GM12878 (cell line): ENCODE measurements at regions of chr9 and their contacts with region 1.

Region 1: GRCh38 chr9:68949271-68950000 is 64.5 kb downstream of the PRKACG start:
- DNase-seq: peak; percentile 45
- ATAC-seq: peak; percentile 57
- H3K4me3 ChIP-seq: no peak overlapping the region
- H3K27ac ChIP-seq: peak overlapping the region; percentile 54
- H3K4me1 ChIP-seq: peaks cover 44% of the 10 kb centered on the region
- H3K27me3 ChIP-seq: no peaks in the 10 kb centered on the region; a peak in 1 of 4 replicates
- CTCF ChIP-seq: peak; percentile 14 to 56 (median 49); a peak in 5 of 6 replicates
- EP300 ChIP-seq: no peak
- POLR2A ChIP-seq: no peak
- RAD21 ChIP-seq: peak; percentile 77

Region 2: GRCh38 chr9:68685770-68686169 is 263.7 kb before region 1 on chr9:
- CTCF ChIA-PET with region 1: interaction called, 27 read pairs
- POLR2A ChIA-PET with region 1: no interaction called
- RAD21 ChIA-PET with region 1: interaction called, 6 read pairs
- SMC1A ChIA-PET with region 1: interaction called, 21 read pairs
- in situ Hi-C with region 1: no loop called
- intact Hi-C with region 1: loop called (anchors 5 kb)
- DNase-seq: no peak
- ATAC-seq: peak; percentile 99
- H3K4me3 ChIP-seq: no peak overlapping the region
- H3K27ac ChIP-seq: no peak overlapping the region
- H3K4me1 ChIP-seq: no peaks in the 10 kb centered on the region
- H3K27me3 ChIP-seq: no peaks in the 10 kb centered on the region
- CTCF ChIP-seq: peak; percentile 73 to 86 (median 77)
- EP300 ChIP-seq: no peak
- POLR2A ChIP-seq: no peak
- RAD21 ChIP-seq: peak; percentile 90

Region 3: GRCh38 chr9:68779558-68780384 is 169.7 kb before region 1 on chr9:
- CTCF ChIA-PET with region 1: interaction called, 3 read pairs
- POLR2A ChIA-PET with region 1: interaction called, 4 read pairs
- RAD21 ChIA-PET with region 1: interaction called, 3 read pairs
- SMC1A ChIA-PET with region 1: interaction called, 6 read pairs
- in situ Hi-C with region 1: no loop called
- intact Hi-C with region 1: loop called (anchors 2 kb)
- DNase-seq: peak; percentile 77
- ATAC-seq: peak; percentile 90
- H3K4me3 ChIP-seq: peak overlapping the region; percentile 83
- H3K27ac ChIP-seq: peak overlapping the region; percentile 92
- H3K4me1 ChIP-seq: peaks cover 2% of the 10 kb centered on the region; the same call in 1 of the 2 replicates
- H3K27me3 ChIP-seq: no peaks in the 10 kb centered on the region
- CTCF ChIP-seq: peak; percentile 31 to 56 (median 38); a peak in 5 of 6 replicates
- EP300 ChIP-seq: no peak
- POLR2A ChIP-seq: peak; percentile 93
- RAD21 ChIP-seq: peak; percentile 37

Region 4: GRCh38 chr9:68966496-68966944 is 17.1 kb after region 1 on chr9:
- CTCF ChIA-PET with region 1: interaction called, 56 read pairs
- POLR2A ChIA-PET with region 1: interaction called, 6 read pairs
- RAD21 ChIA-PET with region 1: interaction called, 41 read pairs
- SMC1A ChIA-PET with region 1: interaction called, 64 read pairs
- in situ Hi-C with region 1: no loop called
- intact Hi-C with region 1: loop called (anchors 2 kb)
- DNase-seq: peak; percentile 46
- ATAC-seq: peak; percentile 86
- H3K4me3 ChIP-seq: no peak overlapping the region
- H3K27ac ChIP-seq: no peak overlapping the region
- H3K4me1 ChIP-seq: peaks cover 16% of the 10 kb centered on the region
- H3K27me3 ChIP-seq: no peaks in the 10 kb centered on the region
- CTCF ChIP-seq: no peak
- EP300 ChIP-seq: peak; percentile 74 to 77; a peak in 3 of 4 replicates
- POLR2A ChIP-seq: no peak
- RAD21 ChIP-seq: no peak

Region 5: DNA sequence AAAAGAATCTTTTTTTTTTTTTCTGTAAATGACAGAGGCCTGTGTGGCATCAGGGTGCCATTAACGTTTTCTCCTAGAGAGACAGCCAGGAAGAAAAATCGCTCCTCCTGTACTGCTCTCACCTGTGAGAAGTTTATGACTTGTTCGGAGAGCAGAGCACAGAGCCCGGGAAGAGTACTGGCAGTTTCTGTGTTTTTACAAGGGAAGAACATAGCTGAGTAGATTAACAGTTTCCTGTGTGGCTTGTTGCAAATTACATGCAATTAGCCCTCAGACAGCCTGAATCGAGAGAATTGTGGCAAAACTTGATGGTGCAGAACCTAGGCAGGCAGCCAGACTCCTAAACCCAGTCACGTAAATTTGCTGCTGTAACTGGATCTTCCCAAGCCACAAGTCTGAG is 32.4 kb after region 1 on chr9:
- CTCF ChIA-PET with region 1: interaction called, 23 read pairs
- POLR2A ChIA-PET with region 1: interaction called, 3 read pairs
- RAD21 ChIA-PET with region 1: interaction called, 7 read pairs
- SMC1A ChIA-PET with region 1: interaction called, 38 read pairs
- in situ Hi-C with region 1: no loop called
- intact Hi-C with region 1: no loop called
- DNase-seq: peak; percentile 83
- ATAC-seq: peak; percentile 74
- H3K4me3 ChIP-seq: peak overlapping the region; percentile 33; the same call in 1 of the 2 replicates
- H3K27ac ChIP-seq: peak overlapping the region; percentile 70
- H3K4me1 ChIP-seq: peaks cover 61% of the 10 kb centered on the region
- H3K27me3 ChIP-seq: no peaks in the 10 kb centered on the region
- CTCF ChIP-seq: no peak
- EP300 ChIP-seq: peak; percentile 50 to 70; a peak in 2 of 4 replicates
- POLR2A ChIP-seq: no peak
- RAD21 ChIP-seq: no peak